Sigmoid colon (tissue), 7 donors: ENCODE measurements at regions of chr2 and their contacts with region 1.

Region 1: GRCh38 chr2:171210864-171211431 is 50.3 kb upstream of the TLK1 start:
- DNase-seq: no peak
- H3K4me3 ChIP-seq: peak overlapping the region in 2 of 4 donors; percentile 10 to 22
- H3K27ac ChIP-seq: peak overlapping the region in 2 of 4 donors; percentile 39 to 57
- H3K4me1 ChIP-seq: peaks cover 0 to 16% (median 8%) of the 10 kb centered on the region in 4 donors
- H3K27me3 ChIP-seq: no peaks in the 10 kb centered on the region
- CTCF ChIP-seq: no peak
- EP300 ChIP-seq: no peak
- POLR2A ChIP-seq: no peak

Region 2: DNA sequence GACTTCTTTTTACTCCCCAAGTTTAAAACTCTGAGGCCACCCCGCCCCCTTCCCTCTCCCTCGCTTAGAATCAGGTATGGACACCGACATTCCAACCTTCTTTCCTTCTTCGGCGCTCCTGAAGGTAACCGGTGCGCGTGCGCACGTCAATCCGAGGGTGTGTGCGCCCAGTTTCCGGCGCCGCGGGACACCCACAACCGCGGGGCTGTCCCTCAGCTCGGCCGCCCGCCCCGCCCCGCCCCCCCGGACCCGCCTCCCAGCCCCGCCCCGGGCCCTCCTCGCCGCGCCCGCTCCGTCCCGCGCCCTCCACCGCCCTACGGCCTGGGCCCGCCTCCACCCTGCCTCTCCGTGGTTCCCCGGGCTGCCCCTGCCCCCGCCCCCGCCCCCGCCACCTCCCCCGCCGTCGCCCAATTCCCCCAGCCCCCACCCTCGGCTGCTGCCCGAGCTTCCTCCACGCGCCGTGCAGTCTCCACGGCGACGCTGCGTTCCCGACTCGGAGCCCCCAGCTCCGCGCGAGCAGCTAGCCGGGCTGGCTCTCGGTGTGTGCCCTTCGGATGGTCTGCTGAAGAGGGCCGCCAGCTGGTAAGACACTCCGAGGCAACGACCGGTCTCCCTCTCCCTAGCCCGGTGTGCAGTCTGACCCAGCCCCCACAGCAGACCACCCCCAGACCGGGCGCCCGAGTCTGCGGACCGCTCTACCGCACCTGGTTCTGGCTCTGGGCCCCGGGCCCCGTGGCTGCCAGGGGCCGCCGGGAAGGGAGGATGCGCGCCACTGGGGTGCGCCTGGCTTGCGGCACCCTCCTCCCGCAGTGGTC is 440.1 kb before region 1 on chr2:
- intact Hi-C with region 1: no loop called
- DNase-seq: peak; percentile 88
- H3K4me3 ChIP-seq: peak overlapping the region; percentile 69 to 74 (median 71)
- H3K27ac ChIP-seq: peak overlapping the region; percentile 74 to 84 (median 79)
- H3K4me1 ChIP-seq: peaks cover 0 to 17% (median 8%) of the 10 kb centered on the region in 4 donors
- H3K27me3 ChIP-seq: no peaks in the 10 kb centered on the region
- CTCF ChIP-seq: no peak
- EP300 ChIP-seq: no peak
- POLR2A ChIP-seq: no peak

Region 3: GRCh38 chr2:171136024-171136423 is 74.9 kb before region 1 on chr2:
- intact Hi-C with region 1: no loop called
- DNase-seq: no peak
- H3K4me3 ChIP-seq: no peak overlapping the region
- H3K27ac ChIP-seq: no peak overlapping the region
- H3K4me1 ChIP-seq: peaks cover 0 to 73% (median 43%) of the 10 kb centered on the region in 4 donors
- H3K27me3 ChIP-seq: no peaks in the 10 kb centered on the region
- CTCF ChIP-seq: no peak
- EP300 ChIP-seq: no peak
- POLR2A ChIP-seq: no peak

Region 4: GRCh38 chr2:171319164-171319810 is 108.3 kb after region 1 on chr2:
- intact Hi-C with region 1: loop called (anchors 10 kb)
- DNase-seq: no peak
- H3K4me3 ChIP-seq: no peak overlapping the region
- H3K27ac ChIP-seq: peak overlapping the region; percentile 8 to 74 (median 64)
- H3K4me1 ChIP-seq: peaks cover 0 to 54% (median 35%) of the 10 kb centered on the region in 4 donors
- H3K27me3 ChIP-seq: no peaks in the 10 kb centered on the region
- CTCF ChIP-seq: no peak
- EP300 ChIP-seq: no peak
- POLR2A ChIP-seq: no peak